ENCODE measurements at regions of chr4 and their contacts with region 1.

Region 1: GRCh38 chr4:153643406-153644383 is 40.4 kb upstream of the TLR2 start:
- DNase-seq: no peak
- ATAC-seq: peak; percentile 94
- H3K4me3 Mint-ChIP-seq: no peak overlapping the region
- H3K27ac Mint-ChIP-seq: peak overlapping the region; percentile 13
- H3K4me1 Mint-ChIP-seq: peaks cover 9% of the 10 kb centered on the region
- H3K27me3 Mint-ChIP-seq: no peaks in the 10 kb centered on the region
- CTCF ChIP-seq: peak; percentile 73

Region 2: DNA sequence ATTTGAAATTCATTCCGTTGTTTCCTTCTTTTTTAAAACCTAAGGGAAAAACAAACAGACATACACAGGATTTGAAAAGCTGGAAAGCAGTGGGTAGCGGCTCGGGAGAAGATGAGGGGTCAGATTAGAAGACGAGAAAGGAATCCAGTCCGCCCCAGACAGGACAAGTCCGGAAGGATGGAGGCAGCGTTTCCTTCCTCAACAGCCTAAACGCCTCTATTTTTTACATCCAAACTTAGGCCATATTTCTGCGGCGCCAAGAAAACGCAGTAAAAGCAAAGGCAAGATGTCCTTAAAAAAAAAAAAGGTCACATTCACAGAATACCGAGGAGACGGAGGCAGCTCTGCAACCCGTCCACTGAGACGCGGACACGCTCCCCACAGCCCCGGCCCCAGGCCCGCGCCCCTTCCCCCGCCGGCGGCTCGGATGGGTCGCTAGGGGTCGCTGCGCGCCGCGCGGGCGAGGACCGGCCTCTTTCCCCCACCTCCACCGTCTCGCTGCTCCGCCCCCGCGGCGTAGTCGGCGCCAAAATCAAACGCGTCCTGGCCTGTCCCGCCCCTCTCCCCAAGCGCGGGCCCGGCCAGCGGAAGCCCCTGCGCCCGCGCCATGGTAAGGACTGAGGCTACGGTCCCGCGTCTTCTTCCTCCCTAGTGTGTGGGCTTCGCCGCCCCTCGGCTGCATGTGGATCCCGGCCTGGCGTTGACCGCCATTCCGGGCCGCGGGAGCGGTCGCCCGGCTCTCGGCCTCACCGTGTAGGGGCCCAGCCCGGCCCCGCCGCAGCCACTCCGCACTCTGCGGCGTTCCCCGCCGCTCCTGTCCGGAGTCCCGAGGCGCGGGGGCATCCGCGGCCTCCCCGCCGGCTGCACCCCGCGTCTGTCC is 299.3 kb before region 1 on chr4 and contains the start of gene MND1:
- CTCF ChIA-PET with region 1: interaction called, 51 read pairs
- POLR2A ChIA-PET with region 1: no interaction called
- intact Hi-C with region 1: loop called (anchors 2 kb)
- DNase-seq: peak; percentile 94
- ATAC-seq: peak; percentile 94
- H3K4me3 Mint-ChIP-seq: peak within 1 kb of the TSS; percentile 93
- H3K27ac Mint-ChIP-seq: peak within 1 kb of the TSS; percentile 87
- H3K4me1 Mint-ChIP-seq: peaks cover 24% of the 10 kb centered on the region
- H3K27me3 Mint-ChIP-seq: peaks cover 12% of the 10 kb centered on the region
- CTCF ChIP-seq: peak; percentile 100
- total RNA-seq, gene MND1: 48.0 to 50.0 TPM

Region 3: GRCh38 chr4:153426207-153426885 is 217.3 kb before region 1 on chr4:
- CTCF ChIA-PET with region 1: interaction called, 3 read pairs
- POLR2A ChIA-PET with region 1: no interaction called
- intact Hi-C with region 1: loop called (anchors 10 kb)
- DNase-seq: no peak
- ATAC-seq: peak; percentile 55
- H3K4me3 Mint-ChIP-seq: no peak overlapping the region
- H3K27ac Mint-ChIP-seq: peak overlapping the region; percentile 80
- H3K4me1 Mint-ChIP-seq: peaks cover 63% of the 10 kb centered on the region
- H3K27me3 Mint-ChIP-seq: no peaks in the 10 kb centered on the region
- CTCF ChIP-seq: no peak

Region 4: DNA sequence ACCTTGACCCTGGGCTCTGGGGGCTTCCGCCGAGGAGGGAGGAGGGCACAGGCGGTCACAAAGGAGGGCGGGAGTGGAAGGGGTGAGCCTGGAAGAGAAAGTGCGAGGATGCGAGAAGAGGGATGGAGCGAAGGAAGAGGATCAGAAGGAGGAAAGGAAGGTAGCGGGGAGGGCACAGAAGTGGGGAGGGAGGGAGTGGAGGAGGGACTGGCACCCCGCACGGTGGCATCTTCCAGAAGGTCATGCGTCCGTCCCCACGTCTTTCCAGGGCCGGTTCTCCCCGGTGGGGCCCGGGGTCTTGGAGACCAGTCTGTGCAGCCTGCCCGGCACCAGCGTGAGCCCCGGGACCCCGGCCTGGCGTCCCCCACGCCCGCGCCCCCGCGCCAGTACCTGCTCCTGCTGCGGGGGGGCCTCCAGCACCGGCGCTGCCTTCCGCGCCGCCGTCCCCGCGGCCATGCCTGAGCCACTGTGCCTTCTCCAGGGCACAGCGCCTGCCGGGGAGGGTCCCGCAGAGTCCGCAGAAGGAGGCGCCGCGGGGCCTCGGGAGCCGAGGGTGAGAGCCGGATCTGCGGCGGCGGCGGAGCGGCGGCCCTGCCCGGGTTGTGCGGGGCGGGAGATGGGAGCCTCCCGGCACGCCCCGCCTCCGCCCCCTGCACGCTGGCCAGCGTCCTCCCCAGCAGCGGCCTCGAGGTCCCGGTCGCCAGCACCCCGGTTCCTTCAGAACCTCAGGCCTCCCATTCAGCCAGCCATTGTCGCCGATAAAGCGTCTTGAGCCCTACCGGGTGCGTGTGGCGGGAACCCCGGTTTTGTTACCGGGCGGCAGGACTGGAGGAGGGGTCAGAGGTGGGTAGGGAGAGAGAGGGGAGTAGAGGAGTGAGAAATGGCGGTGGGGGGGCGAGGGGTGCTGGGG is 116.0 kb after region 1 on chr4 and contains the start of gene RNF175:
- CTCF ChIA-PET with region 1: interaction called, 6 read pairs
- POLR2A ChIA-PET with region 1: no interaction called
- intact Hi-C with region 1: loop called (anchors 5 kb)
- DNase-seq: peak; percentile 7
- ATAC-seq: peak; percentile 47
- H3K4me3 Mint-ChIP-seq: peak within 1 kb of the TSS; percentile 10
- H3K27ac Mint-ChIP-seq: no peak within 1 kb of the TSS
- H3K4me1 Mint-ChIP-seq: peaks cover 12% of the 10 kb centered on the region
- H3K27me3 Mint-ChIP-seq: peaks cover 27% of the 10 kb centered on the region
- CTCF ChIP-seq: no peak
- total RNA-seq, gene RNF175: not detected

Region 5: GRCh38 chr4:153873741-153874140 is 230.0 kb after region 1 on chr4:
- CTCF ChIA-PET with region 1: no interaction called
- POLR2A ChIA-PET with region 1: no interaction called
- intact Hi-C with region 1: no loop called
- DNase-seq: no peak
- ATAC-seq: no peak
- H3K4me3 Mint-ChIP-seq: no peak overlapping the region
- H3K27ac Mint-ChIP-seq: no peak overlapping the region
- H3K4me1 Mint-ChIP-seq: no peaks in the 10 kb centered on the region
- H3K27me3 Mint-ChIP-seq: peaks cover 15% of the 10 kb centered on the region
- CTCF ChIP-seq: no peak